ENCODE measurements at regions of chr10 and their contacts with region 1.

Region 1: GRCh38 chr10:75235375-75236177 is at the start of gene COMTD1:
- DNase-seq: peak; percentile 90 to 96 (median 92)
- ATAC-seq: peak; percentile 66
- H3K4me3 ChIP-seq: peak within 1 kb of the TSS; percentile 68 to 73
- H3K4me3 Mint-ChIP-seq: peak within 1 kb of the TSS; percentile 82
- H3K27ac ChIP-seq: peak within 1 kb of the TSS; percentile 52 to 66
- H3K27ac Mint-ChIP-seq: peak within 1 kb of the TSS; percentile 80
- H3K4me1 ChIP-seq: peaks cover 14% of the 10 kb centered on the region
- H3K4me1 Mint-ChIP-seq: peaks cover 20% of the 10 kb centered on the region
- H3K27me3 ChIP-seq: no peaks in the 10 kb centered on the region
- H3K27me3 Mint-ChIP-seq: no peaks in the 10 kb centered on the region
- CTCF ChIP-seq: peak; percentile 100
- total RNA-seq, gene COMTD1: 7.6 to 7.9 TPM

Region 2: DNA sequence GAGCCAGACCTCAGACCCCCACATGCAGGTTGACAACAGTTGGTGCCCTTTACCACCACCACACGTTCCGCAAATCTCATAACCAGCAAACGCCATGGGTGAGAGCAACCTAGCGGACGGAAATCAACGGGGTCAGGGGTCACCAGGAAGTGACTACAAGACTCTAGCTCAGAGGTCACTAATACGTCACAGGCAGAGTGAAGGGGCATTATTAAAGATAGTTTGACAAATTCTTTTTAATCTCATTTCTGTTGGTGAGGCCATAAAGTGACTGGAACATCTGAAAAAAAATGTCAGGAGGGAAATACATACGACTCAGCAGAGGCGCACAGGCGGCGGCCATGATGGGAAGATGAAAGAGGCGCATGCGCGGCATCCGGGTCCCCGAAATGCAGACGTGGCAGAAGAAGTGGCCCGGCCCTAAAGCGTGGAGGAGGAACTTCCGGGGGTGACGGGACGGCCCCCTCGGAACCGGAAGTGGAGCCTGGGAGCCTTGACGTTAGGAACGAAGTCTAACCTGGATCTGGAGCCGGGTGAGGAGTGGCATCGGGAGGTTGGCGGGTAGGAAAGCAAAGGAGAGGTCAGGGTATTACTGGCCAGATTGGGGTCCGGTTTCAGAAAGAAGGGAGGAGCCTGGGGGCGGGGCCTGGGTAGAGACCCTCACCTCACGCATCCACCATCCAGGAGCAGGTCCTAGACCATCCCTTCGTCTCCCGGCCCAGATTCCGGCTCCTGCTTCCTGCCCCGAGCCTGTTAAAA is 1491.5 kb before region 1 on chr10 and contains the start of gene SEC24C:
- CTCF ChIA-PET with region 1: no interaction called
- POLR2A ChIA-PET with region 1: no interaction called
- intact Hi-C with region 1: loop called in 1 of 2 experiments (anchors 5 kb)
- DNase-seq: peak; percentile 91 to 99 (median 95)
- ATAC-seq: peak; percentile 89
- H3K4me3 ChIP-seq: peak within 1 kb of the TSS; percentile 78 to 79
- H3K4me3 Mint-ChIP-seq: peak within 1 kb of the TSS; percentile 100
- H3K27ac ChIP-seq: peak within 1 kb of the TSS; percentile 94
- H3K27ac Mint-ChIP-seq: peak within 1 kb of the TSS; percentile 100
- H3K4me1 ChIP-seq: peaks cover 31% of the 10 kb centered on the region
- H3K4me1 Mint-ChIP-seq: peaks cover 38% of the 10 kb centered on the region
- H3K27me3 ChIP-seq: no peaks in the 10 kb centered on the region
- H3K27me3 Mint-ChIP-seq: no peaks in the 10 kb centered on the region
- CTCF ChIP-seq: no peak
- total RNA-seq, gene SEC24C: 76.9 to 78.6 TPM

Region 3: DNA sequence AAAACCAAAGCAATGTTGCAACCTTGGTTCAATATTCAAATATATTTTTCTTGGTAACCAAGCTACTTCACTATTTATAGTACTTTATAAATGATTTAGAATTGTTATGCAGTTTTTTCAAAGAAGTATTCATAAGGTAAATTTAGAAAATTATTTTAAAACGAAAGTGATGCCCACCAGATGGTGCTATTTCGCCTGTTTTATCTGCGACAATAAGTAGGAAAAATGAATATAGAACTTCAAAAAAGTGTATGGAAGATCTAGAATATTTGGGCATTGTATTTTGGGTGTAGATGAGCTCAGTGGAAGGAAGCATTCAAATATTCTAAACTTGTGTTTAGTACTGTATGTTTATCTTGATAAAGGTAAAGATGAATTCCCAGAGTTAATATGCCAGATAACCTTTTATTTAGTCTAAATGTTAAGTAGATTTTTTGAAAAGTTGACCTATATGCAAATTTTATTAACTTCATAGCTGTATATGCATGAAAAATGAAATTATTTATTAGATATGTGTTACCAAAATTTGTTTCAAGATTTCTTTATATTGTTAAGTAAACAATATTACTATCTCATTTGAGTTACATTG is 991.4 kb before region 1 on chr10:
- CTCF ChIA-PET with region 1: interaction called, 32 read pairs
- POLR2A ChIA-PET with region 1: no interaction called
- intact Hi-C with region 1: loop called (anchors 1 kb)
- DNase-seq: peak in 3 of 9 experiments; percentile 26 to 68 (median 60)
- ATAC-seq: no peak
- H3K4me3 ChIP-seq: no peak overlapping the region
- H3K4me3 Mint-ChIP-seq: no peak overlapping the region
- H3K27ac ChIP-seq: no peak overlapping the region
- H3K27ac Mint-ChIP-seq: no peak overlapping the region
- H3K4me1 ChIP-seq: no peaks in the 10 kb centered on the region
- H3K4me1 Mint-ChIP-seq: peaks cover 2% of the 10 kb centered on the region
- H3K27me3 ChIP-seq: no peaks in the 10 kb centered on the region
- H3K27me3 Mint-ChIP-seq: no peaks in the 10 kb centered on the region
- CTCF ChIP-seq: peak; percentile 73

Region 4: GRCh38 chr10:74589226-74589673 is 646.3 kb before region 1 on chr10:
- CTCF ChIA-PET with region 1: no interaction called
- POLR2A ChIA-PET with region 1: no interaction called
- intact Hi-C with region 1: loop called in 1 of 2 experiments (anchors 5 kb)
- DNase-seq: peak; percentile 70 to 97 (median 86)
- ATAC-seq: peak; percentile 76
- H3K4me3 ChIP-seq: no peak overlapping the region
- H3K4me3 Mint-ChIP-seq: peak overlapping the region; percentile 49
- H3K27ac ChIP-seq: peak overlapping the region; percentile 36 to 61
- H3K27ac Mint-ChIP-seq: peak overlapping the region; percentile 87
- H3K4me1 ChIP-seq: peaks cover 48% of the 10 kb centered on the region
- H3K4me1 Mint-ChIP-seq: peaks cover 61% of the 10 kb centered on the region
- H3K27me3 ChIP-seq: no peaks in the 10 kb centered on the region
- H3K27me3 Mint-ChIP-seq: no peaks in the 10 kb centered on the region
- CTCF ChIP-seq: no peak

Region 5: GRCh38 chr10:74640134-74640931 is 595.2 kb before region 1 on chr10:
- CTCF ChIA-PET with region 1: no interaction called
- POLR2A ChIA-PET with region 1: no interaction called
- intact Hi-C with region 1: no loop called
- DNase-seq: no peak
- ATAC-seq: no peak
- H3K4me3 ChIP-seq: no peak overlapping the region
- H3K4me3 Mint-ChIP-seq: no peak overlapping the region
- H3K27ac ChIP-seq: no peak overlapping the region
- H3K27ac Mint-ChIP-seq: no peak overlapping the region
- H3K4me1 ChIP-seq: no peaks in the 10 kb centered on the region
- H3K4me1 Mint-ChIP-seq: no peaks in the 10 kb centered on the region
- H3K27me3 ChIP-seq: no peaks in the 10 kb centered on the region
- H3K27me3 Mint-ChIP-seq: no peaks in the 10 kb centered on the region
- CTCF ChIP-seq: no peak

Region 6: GRCh38 chr10:75117995-75118394 is 117.6 kb before region 1 on chr10:
- CTCF ChIA-PET with region 1: no interaction called
- POLR2A ChIA-PET with region 1: no interaction called
- intact Hi-C with region 1: no loop called
- DNase-seq: no peak
- ATAC-seq: no peak
- H3K4me3 ChIP-seq: no peak overlapping the region
- H3K4me3 Mint-ChIP-seq: no peak overlapping the region
- H3K27ac ChIP-seq: no peak overlapping the region
- H3K27ac Mint-ChIP-seq: peak overlapping the region; percentile 30
- H3K4me1 ChIP-seq: peaks cover 10% of the 10 kb centered on the region
- H3K4me1 Mint-ChIP-seq: peaks cover 58% of the 10 kb centered on the region
- H3K27me3 ChIP-seq: no peaks in the 10 kb centered on the region
- H3K27me3 Mint-ChIP-seq: no peaks in the 10 kb centered on the region
- CTCF ChIP-seq: no peak

Region 7: DNA sequence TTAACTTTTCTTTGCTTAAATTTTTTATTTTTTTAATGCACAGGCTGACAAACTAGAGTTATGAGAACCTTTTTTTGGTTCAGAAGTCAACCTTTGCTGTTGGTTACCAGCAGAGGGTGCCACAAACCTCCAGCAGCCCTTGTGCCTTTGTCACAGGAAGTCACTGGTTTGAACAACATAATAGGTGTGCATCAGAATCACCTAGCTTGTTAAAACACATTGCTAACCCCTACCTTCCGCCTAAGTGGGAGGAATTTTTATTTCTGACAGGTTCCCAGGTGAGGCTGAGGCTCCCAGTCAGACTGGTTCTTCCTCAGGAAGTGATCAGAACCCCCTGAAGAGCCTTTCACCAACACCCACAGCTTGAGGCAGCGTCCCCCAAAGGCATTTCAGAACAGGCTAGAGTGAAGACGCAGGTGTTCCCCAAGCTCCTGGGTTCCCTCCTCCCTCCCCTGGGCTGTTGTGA is 47.6 kb before region 1 on chr10:
- CTCF ChIA-PET with region 1: interaction called, 229 read pairs
- POLR2A ChIA-PET with region 1: interaction called, 16 read pairs
- intact Hi-C with region 1: loop called (anchors 1 kb)
- DNase-seq: peak; percentile 46 to 90 (median 73)
- ATAC-seq: peak; percentile 98
- H3K4me3 ChIP-seq: no peak overlapping the region
- H3K4me3 Mint-ChIP-seq: peak overlapping the region; percentile 39
- H3K27ac ChIP-seq: peak overlapping the region; percentile 48 to 79
- H3K27ac Mint-ChIP-seq: peak overlapping the region; percentile 97
- H3K4me1 ChIP-seq: peaks cover 8% of the 10 kb centered on the region
- H3K4me1 Mint-ChIP-seq: peaks cover 7% of the 10 kb centered on the region
- H3K27me3 ChIP-seq: no peaks in the 10 kb centered on the region
- H3K27me3 Mint-ChIP-seq: no peaks in the 10 kb centered on the region
- CTCF ChIP-seq: peak; percentile 87

Region 8: GRCh38 chr10:75487087-75487754 is 251.6 kb after region 1 on chr10:
- CTCF ChIA-PET with region 1: no interaction called
- POLR2A ChIA-PET with region 1: no interaction called
- intact Hi-C with region 1: no loop called
- DNase-seq: no peak
- ATAC-seq: no peak
- H3K4me3 ChIP-seq: no peak overlapping the region
- H3K4me3 Mint-ChIP-seq: no peak overlapping the region
- H3K27ac ChIP-seq: no peak overlapping the region
- H3K27ac Mint-ChIP-seq: no peak overlapping the region
- H3K4me1 ChIP-seq: no peaks in the 10 kb centered on the region
- H3K4me1 Mint-ChIP-seq: no peaks in the 10 kb centered on the region
- H3K27me3 ChIP-seq: no peaks in the 10 kb centered on the region
- H3K27me3 Mint-ChIP-seq: peaks cover 4% of the 10 kb centered on the region
- CTCF ChIP-seq: no peak